Heart right ventricle (tissue), 16 donors: ENCODE measurements at regions of chr5 and their contacts with region 1.

Region 1: GRCh38 chr5:143002459-143003328 is 232.5 kb downstream of the ARHGAP26 start:
- DNase-seq: peak in 1 of 2 donors; percentile 51
- ATAC-seq: peak; percentile 79 to 92 (median 84)
- H3K4me3 ChIP-seq: peak overlapping the region in 2 of 10 donors; percentile 11 to 12
- H3K27ac ChIP-seq: peak overlapping the region in 9 of 10 donors; percentile 23 to 90 (median 73)
- H3K4me1 ChIP-seq: peaks cover 10 to 82% (median 59%) of the 10 kb centered on the region in 9 donors
- H3K27me3 ChIP-seq: no peaks in the 10 kb centered on the region
- CTCF ChIP-seq: peak; percentile 8 to 71 (median 55)

Region 2: DNA sequence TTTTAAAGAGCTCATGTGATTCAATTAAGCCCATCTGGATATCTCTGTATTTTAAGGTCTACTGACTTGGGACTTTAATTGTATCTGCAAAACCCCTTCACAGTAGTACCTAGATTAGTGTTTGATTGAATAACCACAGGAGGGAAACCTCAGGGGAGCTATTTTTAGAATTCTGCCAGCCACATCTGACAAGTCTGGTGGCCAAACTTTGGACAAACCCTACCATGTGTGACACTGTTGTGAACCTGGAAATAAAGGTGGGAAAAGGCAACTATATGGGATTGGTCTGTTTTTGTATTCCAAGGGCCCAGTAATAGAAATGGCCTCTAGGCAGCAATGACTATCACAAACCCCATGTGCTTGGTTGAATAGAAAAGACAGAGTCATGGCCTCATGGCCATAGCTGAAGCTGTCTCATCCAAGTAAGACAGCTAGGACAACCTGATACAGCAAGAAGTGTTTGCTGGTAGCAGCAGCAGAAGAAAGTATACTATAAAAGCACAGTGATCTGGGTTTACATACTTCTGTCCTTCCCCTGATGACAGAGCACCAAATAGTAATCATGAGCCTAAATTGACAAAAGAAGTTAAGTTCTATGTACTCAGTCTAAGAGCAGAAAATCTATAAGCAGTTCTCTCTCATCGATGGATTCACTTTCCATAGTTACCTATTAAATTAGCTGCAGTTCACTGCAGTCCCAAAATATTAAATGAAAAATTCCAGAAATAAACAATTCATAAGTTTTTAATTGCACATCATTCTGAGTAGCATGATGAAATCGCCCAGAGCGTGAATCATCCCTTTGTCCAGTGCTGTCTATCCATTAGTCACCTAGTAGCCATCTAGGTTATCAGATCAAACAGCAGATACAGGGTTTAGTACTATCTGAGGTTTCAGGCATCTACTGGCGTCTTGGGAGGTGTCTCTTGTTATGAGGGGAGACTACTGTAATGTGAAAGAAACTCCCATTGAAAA is 42.7 kb before region 1 on chr5:
- intact Hi-C with region 1: no loop called
- DNase-seq: no peak
- ATAC-seq: no peak
- H3K4me3 ChIP-seq: no peak overlapping the region
- H3K27ac ChIP-seq: peak overlapping the region in 2 of 10 donors; percentile 15 to 71
- H3K4me1 ChIP-seq: peaks cover 0 to 76% (median 44%) of the 10 kb centered on the region in 9 donors
- H3K27me3 ChIP-seq: no peaks in the 10 kb centered on the region
- CTCF ChIP-seq: no peak

Region 3: GRCh38 chr5:143051244-143052058 is 48.8 kb after region 1 on chr5:
- intact Hi-C with region 1: loop called in 1 of 10 experiments (anchors 10 kb)
- DNase-seq: peak in 1 of 2 donors; percentile 51
- ATAC-seq: peak; percentile 92 to 98 (median 96)
- H3K4me3 ChIP-seq: no peak overlapping the region
- H3K27ac ChIP-seq: peak overlapping the region; percentile 44 to 87 (median 82)
- H3K4me1 ChIP-seq: peaks cover 2 to 59% (median 47%) of the 10 kb centered on the region in 9 donors
- H3K27me3 ChIP-seq: no peaks in the 10 kb centered on the region
- CTCF ChIP-seq: no peak

Region 4: GRCh38 chr5:143066556-143067281 is 64.0 kb after region 1 on chr5:
- intact Hi-C with region 1: loop called in 2 of 10 experiments (anchors 5 to 10 kb)
- DNase-seq: peak in 1 of 2 donors; percentile 43
- ATAC-seq: peak in 4 of 8 donors; percentile 3 to 21 (median 6)
- H3K4me3 ChIP-seq: no peak overlapping the region
- H3K27ac ChIP-seq: peak overlapping the region in 7 of 10 donors; percentile 19 to 85 (median 36)
- H3K4me1 ChIP-seq: peaks cover 9 to 60% (median 54%) of the 10 kb centered on the region in 9 donors
- H3K27me3 ChIP-seq: no peaks in the 10 kb centered on the region
- CTCF ChIP-seq: no peak

Region 5: DNA sequence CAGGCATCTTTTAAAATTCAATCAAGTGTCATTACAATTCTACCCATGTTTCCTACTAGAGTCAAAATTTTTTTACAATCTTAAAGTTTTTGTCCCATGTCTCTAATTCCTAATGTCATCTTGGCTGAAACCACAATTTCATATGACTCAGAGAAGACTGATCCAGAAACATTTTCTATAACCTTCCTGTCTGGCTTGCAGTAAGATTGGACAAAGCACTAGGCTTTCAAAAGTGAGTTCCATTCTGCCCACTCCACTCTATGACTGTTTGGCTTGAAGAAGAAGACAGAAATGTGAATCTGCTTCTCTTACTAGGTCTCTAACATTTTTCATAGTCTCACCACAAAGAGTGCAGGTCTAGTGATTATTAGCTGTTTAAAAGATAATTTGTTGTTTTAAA is 312.0 kb after region 1 on chr5:
- intact Hi-C with region 1: loop called in 1 of 10 experiments (anchors 10 kb)
- DNase-seq: no peak
- ATAC-seq: peak in 4 of 8 donors; percentile 24 to 74 (median 52)
- H3K4me3 ChIP-seq: no peak overlapping the region
- H3K27ac ChIP-seq: peak overlapping the region in 2 of 10 donors; percentile 2 to 42
- H3K4me1 ChIP-seq: peaks cover 11 to 90% (median 69%) of the 10 kb centered on the region in 9 donors
- H3K27me3 ChIP-seq: no peaks in the 10 kb centered on the region
- CTCF ChIP-seq: no peak

Region 6: GRCh38 chr5:143837306-143837848 is 834.7 kb after region 1 on chr5:
- intact Hi-C with region 1: loop called in 1 of 10 experiments (anchors 10 kb)
- DNase-seq: no peak
- ATAC-seq: peak in 5 of 8 donors; percentile 46 to 80 (median 49)
- H3K4me3 ChIP-seq: no peak overlapping the region
- H3K27ac ChIP-seq: no peak overlapping the region
- H3K4me1 ChIP-seq: no peaks in the 10 kb centered on the region
- H3K27me3 ChIP-seq: no peaks in the 10 kb centered on the region
- CTCF ChIP-seq: no peak